Mammary epithelial cell (primary cell): ENCODE measurements at regions of chr6 and their contacts with region 1.

Region 1: GRCh38 chr6:2931970-2932748 is 29.1 kb upstream of the SERPINB9 start:
- DNase-seq: peak; percentile 73
- H3K4me3 ChIP-seq: no peak overlapping the region
- H3K27ac ChIP-seq: no peak overlapping the region
- H3K4me1 ChIP-seq: no peaks in the 10 kb centered on the region
- H3K27me3 ChIP-seq: peaks cover 3% of the 10 kb centered on the region
- CTCF ChIP-seq: peak; percentile 98 to 99

Region 2: DNA sequence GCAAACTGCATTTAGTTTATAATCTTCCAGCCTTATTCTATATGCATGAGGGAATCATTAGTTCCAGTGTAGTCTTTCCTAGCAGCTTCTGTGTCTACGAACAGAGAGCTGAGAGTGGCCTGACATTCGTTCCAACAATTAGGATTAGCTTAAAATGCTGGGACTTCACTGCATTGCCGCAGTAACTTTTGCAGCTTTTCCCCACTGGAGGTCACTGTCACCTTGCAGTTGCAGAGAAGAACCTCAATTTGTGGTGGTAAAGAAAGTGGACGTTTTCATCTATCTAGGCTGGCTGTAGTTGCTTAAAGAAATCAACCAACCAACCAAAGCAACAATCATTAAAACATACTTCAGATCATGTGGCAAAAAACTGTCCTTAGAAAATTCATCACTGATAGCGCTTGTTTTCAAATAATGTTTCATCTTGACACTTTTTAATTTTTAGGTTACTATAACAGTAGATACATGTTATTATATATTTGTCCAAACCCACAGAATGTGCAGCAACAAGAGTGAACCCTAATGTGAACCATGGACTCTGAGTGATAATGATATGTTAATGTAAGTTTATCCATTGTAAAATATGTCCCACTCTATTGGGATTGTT is 193.7 kb before region 1 on chr6:
- CTCF ChIA-PET with region 1: no interaction called
- dilution Hi-C with region 1: no loop called
- in situ Hi-C with region 1: no loop called
- intact Hi-C with region 1: loop called (anchors 2 kb)
- DNase-seq: peak; percentile 37
- H3K4me3 ChIP-seq: no peak overlapping the region
- H3K27ac ChIP-seq: no peak overlapping the region
- H3K4me1 ChIP-seq: peaks cover 3% of the 10 kb centered on the region
- H3K27me3 ChIP-seq: no peaks in the 10 kb centered on the region
- CTCF ChIP-seq: peak; percentile 59 to 73

Region 3: DNA sequence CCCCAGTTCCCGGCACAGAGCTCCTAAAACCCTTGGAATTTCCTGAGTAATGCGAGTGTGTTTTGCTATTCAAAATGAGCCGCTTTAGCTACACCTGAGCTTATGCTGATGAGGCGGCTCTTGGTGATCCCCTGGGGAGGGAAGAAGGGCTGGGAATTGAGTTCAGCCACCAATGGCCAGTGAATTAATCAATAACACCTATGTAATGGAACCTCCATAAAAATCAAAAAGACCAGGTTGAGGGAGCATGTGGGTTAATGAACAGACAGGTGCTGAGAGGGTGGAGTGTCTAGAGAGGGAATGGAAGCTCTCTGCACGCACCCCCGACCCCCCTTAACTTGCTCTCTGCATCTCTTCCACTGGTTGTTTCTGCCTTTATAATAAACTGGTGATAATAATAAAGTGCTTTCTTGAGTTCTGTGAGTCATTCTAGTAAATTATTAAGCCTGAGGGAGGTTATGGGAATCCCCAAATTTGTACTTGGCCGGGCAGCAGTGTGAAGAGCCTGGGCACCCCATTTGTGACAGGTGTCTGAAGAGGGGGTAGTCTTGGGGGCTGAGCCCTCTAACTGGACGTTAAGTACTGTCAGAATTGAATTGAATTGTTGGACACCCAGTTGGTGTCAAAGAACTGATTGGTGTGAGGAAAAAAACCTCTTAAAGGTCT is 65.8 kb before region 1 on chr6:
- CTCF ChIA-PET with region 1: no interaction called
- dilution Hi-C with region 1: no loop called
- in situ Hi-C with region 1: no loop called
- intact Hi-C with region 1: no loop called
- DNase-seq: peak; percentile 37
- H3K4me3 ChIP-seq: no peak overlapping the region
- H3K27ac ChIP-seq: no peak overlapping the region
- H3K4me1 ChIP-seq: peaks cover 7% of the 10 kb centered on the region
- H3K27me3 ChIP-seq: no peaks in the 10 kb centered on the region
- CTCF ChIP-seq: no peak

Region 4: GRCh38 chr6:2891768-2892170 is 40.4 kb before region 1 on chr6:
- CTCF ChIA-PET with region 1: no interaction called
- dilution Hi-C with region 1: loop called (anchors 5 kb)
- in situ Hi-C with region 1: no loop called
- intact Hi-C with region 1: no loop called
- DNase-seq: no peak
- H3K4me3 ChIP-seq: no peak overlapping the region
- H3K27ac ChIP-seq: no peak overlapping the region
- H3K4me1 ChIP-seq: no peaks in the 10 kb centered on the region
- H3K27me3 ChIP-seq: peaks cover 3% of the 10 kb centered on the region
- CTCF ChIP-seq: no peak

Region 5: GRCh38 chr6:3561725-3562124 is 629.6 kb after region 1 on chr6:
- CTCF ChIA-PET with region 1: no interaction called
- dilution Hi-C with region 1: no loop called
- in situ Hi-C with region 1: no loop called
- intact Hi-C with region 1: no loop called
- DNase-seq: no peak
- H3K4me3 ChIP-seq: no peak overlapping the region
- H3K27ac ChIP-seq: no peak overlapping the region
- H3K4me1 ChIP-seq: no peaks in the 10 kb centered on the region
- H3K27me3 ChIP-seq: no peaks in the 10 kb centered on the region
- CTCF ChIP-seq: peak; percentile 5 to 35

Region 6: GRCh38 chr6:3635482-3635881 is 703.3 kb after region 1 on chr6:
- CTCF ChIA-PET with region 1: no interaction called
- dilution Hi-C with region 1: no loop called
- in situ Hi-C with region 1: no loop called
- intact Hi-C with region 1: no loop called
- DNase-seq: no peak
- H3K4me3 ChIP-seq: no peak overlapping the region
- H3K27ac ChIP-seq: no peak overlapping the region
- H3K4me1 ChIP-seq: no peaks in the 10 kb centered on the region
- H3K27me3 ChIP-seq: no peaks in the 10 kb centered on the region
- CTCF ChIP-seq: no peak